ENCODE measurements at regions of chr12 and their contacts with region 1.

Region 1: GRCh38 chr12:6873094-6874014 is at the start of gene SPSB2:
- DNase-seq: peak; percentile 88 to 98
- ATAC-seq: peak; percentile 65 to 81
- H3K4me3 ChIP-seq: peak within 1 kb of the TSS; percentile 77
- H3K27ac ChIP-seq: peak within 1 kb of the TSS; percentile 93 to 94
- H3K4me1 ChIP-seq: peaks cover 42% of the 10 kb centered on the region
- CTCF ChIP-seq: no peak
- EP300 ChIP-seq: no peak
- POLR2A ChIP-seq: peak; percentile 82
- RAD21 ChIP-seq: peak; percentile 7 to 26; a peak in 3 of 5 replicates
- polyA plus RNA-seq, gene SPSB2: 15.3 and 16.8 TPM in 2 replicates

Region 2: DNA sequence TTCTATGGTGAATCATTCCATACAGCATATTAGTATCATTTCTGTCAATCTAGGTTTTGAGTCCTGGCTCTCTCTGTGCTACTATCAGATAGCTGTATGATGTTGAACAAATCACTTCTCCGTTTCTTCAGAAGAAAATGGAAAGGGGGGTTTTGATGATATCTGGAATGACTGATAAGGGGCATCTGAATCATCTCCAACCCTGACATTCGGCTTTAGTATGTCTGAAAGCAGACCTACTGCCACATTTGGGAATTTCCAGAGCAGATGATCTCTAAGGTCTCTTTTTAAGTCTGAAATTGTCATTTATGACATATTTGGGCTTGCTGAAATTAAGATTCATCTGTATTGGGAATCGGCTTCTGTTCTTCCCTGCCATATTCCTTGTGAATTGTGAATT is 130.5 kb before region 1 on chr12:
- CTCF ChIA-PET with region 1: no interaction called
- POLR2A ChIA-PET with region 1: no interaction called
- DNase-seq: no peak
- ATAC-seq: no peak
- H3K4me3 ChIP-seq: no peak overlapping the region
- H3K27ac ChIP-seq: no peak overlapping the region
- H3K4me1 ChIP-seq: 0 out of 3 replicates have a peak, but pooled peaks cover 4% of the 10 kb centered on the region
- CTCF ChIP-seq: no peak
- EP300 ChIP-seq: no peak
- POLR2A ChIP-seq: no peak
- RAD21 ChIP-seq: no peak

Region 3: DNA sequence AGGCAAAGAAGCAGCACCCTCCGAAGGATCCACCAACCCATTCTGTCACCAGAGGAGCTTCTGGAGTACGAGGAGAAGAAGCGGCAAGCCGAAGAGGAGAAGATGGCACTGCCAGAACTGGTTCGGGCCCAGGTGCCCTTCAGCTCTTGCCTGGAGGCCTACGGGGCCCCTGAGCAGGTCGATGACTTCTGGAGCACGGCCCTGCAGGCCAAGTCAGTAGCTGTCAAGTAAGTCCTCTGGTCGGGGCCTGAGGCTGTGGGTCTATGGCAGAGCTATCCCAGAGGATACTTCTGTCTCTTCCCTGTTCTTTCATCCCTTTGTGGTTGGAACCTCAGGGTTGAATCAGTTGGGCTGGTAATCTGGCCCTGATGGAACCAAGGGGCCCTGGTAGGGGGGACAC is 12.0 kb before region 1 on chr12:
- CTCF ChIA-PET with region 1: interaction called, 69 read pairs
- POLR2A ChIA-PET with region 1: interaction called, 6 read pairs
- DNase-seq: no peak
- ATAC-seq: no peak
- H3K4me3 ChIP-seq: no peak overlapping the region
- H3K27ac ChIP-seq: no peak overlapping the region
- H3K4me1 ChIP-seq: peaks cover 3% of the 10 kb centered on the region
- CTCF ChIP-seq: no peak
- EP300 ChIP-seq: no peak
- POLR2A ChIP-seq: no peak
- RAD21 ChIP-seq: no peak

Region 4: DNA sequence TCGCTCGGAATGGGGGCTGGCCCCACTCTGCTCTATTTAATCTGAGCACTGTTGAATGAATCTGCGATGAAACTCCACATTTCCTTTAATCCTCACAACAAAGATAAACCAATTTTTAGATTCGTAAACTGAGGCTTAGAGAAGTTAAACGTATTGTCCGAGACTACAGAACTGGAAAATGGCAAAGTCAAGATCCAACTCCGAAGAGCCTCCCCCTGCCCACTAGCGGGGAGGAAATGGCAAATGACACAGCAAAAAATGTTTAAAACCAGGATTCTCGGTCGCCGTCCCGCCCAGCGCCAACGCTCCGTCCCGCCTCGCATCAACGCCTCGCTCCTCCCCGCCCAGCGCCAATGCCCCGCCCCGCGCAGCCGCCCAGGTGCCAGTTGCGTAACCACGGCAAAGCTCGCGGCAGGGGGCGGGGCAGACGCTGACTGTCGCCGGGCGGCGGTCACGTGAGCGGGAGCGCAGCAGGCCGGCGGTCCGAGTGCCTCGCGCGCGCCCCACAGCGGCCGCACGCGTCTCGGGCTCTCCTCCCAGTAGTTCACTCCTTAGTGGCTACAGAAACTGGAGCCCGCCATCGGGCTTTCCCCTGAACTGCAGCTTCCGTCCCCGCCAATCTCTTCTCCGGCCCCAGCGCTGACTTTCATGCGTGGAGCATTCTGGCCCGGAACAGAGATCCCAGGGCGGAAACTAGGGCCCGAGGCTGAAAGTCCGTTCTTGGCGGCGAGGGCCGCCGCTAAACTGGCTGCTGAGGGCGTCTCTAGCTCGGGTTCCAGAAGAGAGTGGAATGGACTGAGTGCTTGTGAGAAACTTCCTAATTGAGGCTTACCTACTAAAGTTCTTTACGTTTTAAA is 17.7 kb after region 1 on chr12:
- CTCF ChIA-PET with region 1: interaction called, 399 read pairs
- POLR2A ChIA-PET with region 1: interaction called, 105 read pairs
- DNase-seq: peak; percentile 93 to 99
- ATAC-seq: peak; percentile 95 to 96
- H3K4me3 ChIP-seq: peak overlapping the region; percentile 40
- H3K27ac ChIP-seq: peak overlapping the region; percentile 94 to 98
- H3K4me1 ChIP-seq: peaks cover 38% of the 10 kb centered on the region
- CTCF ChIP-seq: peak; percentile 95
- EP300 ChIP-seq: peak in 1 of 2 experiments; percentile 54; a peak in 1 of 5 replicates
- POLR2A ChIP-seq: peak; percentile 70
- RAD21 ChIP-seq: peak; percentile 69 to 94

Region 5: GRCh38 chr12:6921996-6922946 is 48.9 kb after region 1 on chr12:
- CTCF ChIA-PET with region 1: interaction called, 232 read pairs
- POLR2A ChIA-PET with region 1: interaction called, 14 read pairs
- DNase-seq: no peak
- ATAC-seq: no peak
- H3K4me3 ChIP-seq: no peak overlapping the region
- H3K27ac ChIP-seq: no peak overlapping the region
- H3K4me1 ChIP-seq: peaks cover 28% of the 10 kb centered on the region
- CTCF ChIP-seq: no peak
- EP300 ChIP-seq: no peak
- POLR2A ChIP-seq: no peak
- RAD21 ChIP-seq: no peak

Region 6: DNA sequence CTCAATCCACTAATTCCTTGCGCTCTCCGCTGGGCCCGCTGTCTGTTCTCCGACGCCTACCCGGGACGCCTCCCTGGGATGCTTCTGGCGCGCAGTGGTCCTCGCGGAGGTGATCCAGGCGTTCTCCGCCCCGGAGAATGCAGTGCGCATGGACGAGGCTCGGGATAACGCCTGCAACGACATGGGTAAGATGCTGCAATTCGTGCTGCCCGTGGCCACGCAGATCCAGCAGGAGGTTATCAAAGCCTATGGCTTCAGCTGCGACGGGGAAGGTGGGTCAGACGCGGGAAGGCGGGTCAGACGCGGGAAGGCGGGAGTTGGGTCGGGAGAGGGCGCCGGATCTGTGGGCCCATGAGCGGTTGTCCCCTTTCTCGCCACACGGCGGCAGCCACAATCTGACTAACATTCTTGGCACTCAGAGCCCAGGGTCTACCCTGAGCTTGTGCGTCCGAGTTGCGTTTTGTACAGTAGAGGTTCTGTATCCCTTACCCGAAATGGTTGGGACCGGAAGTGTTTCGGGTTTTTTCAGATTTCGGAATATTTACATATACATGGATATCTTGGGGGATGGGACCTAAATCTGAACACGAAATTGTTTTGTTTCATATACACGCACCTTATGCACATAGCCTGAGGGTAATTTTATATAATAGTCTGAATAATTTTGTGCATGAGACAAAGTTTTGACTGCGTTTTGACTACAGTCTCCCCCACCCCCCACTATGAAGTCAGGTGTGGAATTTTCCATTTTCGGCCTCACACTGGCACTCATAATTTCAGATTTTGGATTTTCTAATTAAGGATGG is 71.2 kb after region 1 on chr12:
- CTCF ChIA-PET with region 1: interaction called, 80 read pairs
- POLR2A ChIA-PET with region 1: interaction called, 48 read pairs
- DNase-seq: peak; percentile 93 to 97
- ATAC-seq: peak; percentile 52 to 73
- H3K4me3 ChIP-seq: peak overlapping the region; percentile 59
- H3K27ac ChIP-seq: peak overlapping the region; percentile 80 to 90
- H3K4me1 ChIP-seq: peaks cover 36% of the 10 kb centered on the region
- CTCF ChIP-seq: peak; percentile 85
- EP300 ChIP-seq: no peak
- POLR2A ChIP-seq: no peak; the same call in 1 of the 2 replicates
- RAD21 ChIP-seq: peak; percentile 87